ENCODE measurements at regions of chr11 and their contacts with region 1.

Region 1: GRCh38 chr11:34640050-34640923 is 19.4 kb downstream of the EHF start:
- DNase-seq: peak; percentile 35
- CTCF ChIP-seq: no peak

Region 2: GRCh38 chr11:34653826-34654490 is 13.7 kb after region 1 on chr11:
- CTCF ChIA-PET with region 1: interaction called, 10 read pairs
- POLR2A ChIA-PET with region 1: interaction called, 3 read pairs
- DNase-seq: no peak
- CTCF ChIP-seq: no peak

Region 3: DNA sequence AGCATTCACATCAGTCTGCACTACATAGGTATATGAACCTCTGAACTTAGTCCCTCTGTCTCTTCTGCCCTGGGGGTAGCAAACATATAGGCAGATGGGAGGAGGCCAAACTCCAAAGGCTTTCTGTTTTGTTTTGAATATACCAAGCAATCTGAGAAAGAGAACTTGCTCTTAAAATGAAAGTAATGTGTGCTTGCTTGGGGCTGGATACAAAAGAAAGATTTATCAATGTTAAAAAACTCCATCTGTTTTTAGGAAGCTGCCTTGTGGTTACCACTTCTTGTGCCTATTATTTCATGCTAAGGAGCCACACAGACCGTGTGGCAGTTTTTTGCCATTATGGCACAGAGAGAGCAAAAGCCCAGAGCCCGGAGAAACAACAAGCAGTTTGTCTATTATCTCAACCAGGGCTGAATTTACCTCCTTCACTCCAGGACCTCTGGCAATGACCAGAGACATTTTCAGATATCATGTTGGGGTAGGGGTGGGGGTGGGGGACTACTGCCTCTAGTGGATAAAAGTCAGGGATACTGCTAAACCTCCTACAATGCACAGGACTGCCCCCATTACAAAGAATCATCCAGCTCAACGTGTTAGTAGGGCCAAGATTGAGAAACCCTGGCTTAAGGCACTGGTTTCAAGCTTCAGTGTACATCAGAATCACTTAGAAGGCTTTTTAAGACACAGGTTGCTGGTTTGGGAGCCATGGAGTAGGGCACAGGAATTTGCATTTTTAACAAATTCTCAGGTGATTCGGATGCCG is 151.7 kb after region 1 on chr11:
- CTCF ChIA-PET with region 1: no interaction called
- POLR2A ChIA-PET with region 1: no interaction called
- DNase-seq: no peak
- CTCF ChIP-seq: no peak